Tibial artery (tissue), 4 donors: ENCODE measurements at regions of chr5 and their contacts with region 1.

Region 1: DNA sequence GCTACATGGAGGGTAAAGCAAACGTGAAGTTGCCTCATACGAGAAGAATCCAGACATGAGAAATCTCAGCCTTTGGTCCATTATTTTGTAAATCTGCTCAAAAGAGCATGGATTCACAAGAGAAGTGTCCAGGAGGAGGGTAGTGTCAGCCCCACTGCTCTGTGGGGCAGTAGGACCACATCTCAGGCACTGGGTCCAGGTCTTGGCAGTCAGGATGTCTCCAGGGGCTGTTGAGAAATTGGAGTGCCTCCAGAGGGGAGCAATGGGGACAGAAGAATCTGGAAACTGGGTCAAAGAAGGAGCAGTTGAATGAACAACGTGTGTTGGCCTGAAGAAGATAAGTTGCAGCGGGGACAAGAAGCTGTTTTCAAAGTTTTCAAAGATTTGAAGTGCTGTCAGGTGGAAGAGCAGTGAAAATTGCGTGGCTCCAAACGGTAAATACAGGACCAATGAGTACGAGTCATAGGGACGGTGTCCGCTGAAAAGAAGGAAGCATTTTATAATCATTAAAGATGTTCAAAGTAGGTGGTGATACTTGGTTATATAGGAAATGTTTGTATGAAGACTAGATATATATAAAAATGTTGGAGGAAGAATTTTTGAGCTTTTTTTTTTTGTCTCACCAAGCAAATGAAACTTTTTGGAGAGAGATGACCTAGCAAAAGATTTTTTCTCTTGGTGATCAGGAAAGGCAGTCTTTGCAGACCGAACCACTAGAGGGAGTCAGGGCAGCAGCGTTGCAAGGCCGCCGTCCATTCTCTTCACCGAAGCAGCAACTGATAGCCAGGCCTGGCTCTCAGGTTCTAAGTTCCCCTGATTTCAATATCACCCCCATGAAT is 57.1 kb upstream of the ZBED3 start:
- DNase-seq: peak; percentile 71 to 86
- H3K4me3 ChIP-seq: no peak overlapping the region
- H3K27ac ChIP-seq: peak overlapping the region in 1 of 2 donors; percentile 18
- H3K4me1 ChIP-seq: peaks cover 0 to 22% (median 2%) of the 10 kb centered on the region in 4 donors
- H3K27me3 ChIP-seq: no peaks in the 10 kb centered on the region
- CTCF ChIP-seq: peak; percentile 78 to 82

Region 2: GRCh38 chr5:77437194-77437593 is 293.0 kb after region 1 on chr5:
- intact Hi-C with region 1: loop called (anchors 5 kb)
- DNase-seq: no peak
- H3K4me3 ChIP-seq: no peak overlapping the region
- H3K27ac ChIP-seq: no peak overlapping the region
- H3K4me1 ChIP-seq: no peaks in the 10 kb centered on the region
- H3K27me3 ChIP-seq: no peaks in the 10 kb centered on the region
- CTCF ChIP-seq: peak in 1 of 2 experiments; percentile 31

Region 3: DNA sequence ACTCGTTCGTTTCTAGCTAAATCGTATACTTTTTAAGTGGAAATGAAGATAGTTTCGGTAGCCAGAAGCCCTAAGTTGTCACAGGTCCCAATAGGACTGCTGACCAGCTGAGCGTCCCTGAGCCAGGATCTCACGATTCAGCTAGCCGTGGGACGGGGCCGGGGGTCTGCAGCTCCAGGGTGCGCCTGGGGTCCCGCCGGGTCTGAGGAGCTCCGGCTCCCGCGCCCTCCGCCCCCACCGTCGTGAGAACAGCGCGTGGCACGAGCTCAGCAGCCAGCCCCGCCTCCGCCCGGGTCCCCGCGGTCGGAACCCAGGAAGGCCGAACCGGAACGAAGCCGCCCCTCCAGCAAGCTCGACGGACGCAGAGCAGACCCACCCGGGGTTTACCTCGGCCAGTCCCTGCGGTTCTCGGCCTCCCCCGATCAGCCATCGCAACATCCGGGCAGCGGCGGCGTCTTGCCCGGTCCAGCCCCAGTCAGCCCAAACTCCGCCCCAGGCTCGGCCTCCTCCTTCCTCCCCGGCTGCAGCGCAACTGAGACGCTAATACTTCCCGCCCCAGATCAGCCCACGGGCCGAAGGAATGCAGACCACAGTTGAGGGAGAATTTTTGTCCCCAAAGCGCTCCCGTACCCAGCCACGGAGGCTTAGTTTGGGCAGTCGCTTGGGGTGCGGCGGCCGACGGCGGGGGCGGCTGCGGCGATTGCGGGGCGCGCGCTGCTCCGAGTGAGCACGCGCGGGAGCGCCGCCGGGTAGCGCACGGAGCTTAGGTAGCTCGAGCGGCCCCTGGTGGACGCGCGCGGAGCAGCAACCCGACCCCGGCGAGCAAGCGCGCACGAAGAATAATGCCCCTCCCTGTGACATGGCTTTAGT is 347.8 kb after region 1 on chr5 and contains the start of gene WDR41:
- intact Hi-C with region 1: loop called (anchors 5 kb)
- DNase-seq: peak; percentile 94 to 96
- H3K4me3 ChIP-seq: peak within 1 kb of the TSS; percentile 86 to 92
- H3K27ac ChIP-seq: peak within 1 kb of the TSS; percentile 96 to 97
- H3K4me1 ChIP-seq: peaks cover 0 to 15% (median 3%) of the 10 kb centered on the region in 4 donors
- H3K27me3 ChIP-seq: peaks cover 0 to 4% of the 10 kb centered on the region in 2 donors
- CTCF ChIP-seq: peak; percentile 93 to 95